Heart left ventricle (tissue), 16 donors: ENCODE measurements at regions of chr4 and their contacts with region 1.

Region 1: GRCh38 chr4:134499074-134499473 is 297.5 kb upstream of the PABPC4L start:
- DNase-seq: no peak
- ATAC-seq: no peak
- H3K4me3 ChIP-seq: no peak overlapping the region
- H3K27ac ChIP-seq: no peak overlapping the region
- H3K4me1 ChIP-seq: no peaks in the 10 kb centered on the region
- H3K27me3 ChIP-seq: no peaks in the 10 kb centered on the region
- CTCF ChIP-seq: no peak
- POLR2A ChIP-seq: no peak

Region 2: DNA sequence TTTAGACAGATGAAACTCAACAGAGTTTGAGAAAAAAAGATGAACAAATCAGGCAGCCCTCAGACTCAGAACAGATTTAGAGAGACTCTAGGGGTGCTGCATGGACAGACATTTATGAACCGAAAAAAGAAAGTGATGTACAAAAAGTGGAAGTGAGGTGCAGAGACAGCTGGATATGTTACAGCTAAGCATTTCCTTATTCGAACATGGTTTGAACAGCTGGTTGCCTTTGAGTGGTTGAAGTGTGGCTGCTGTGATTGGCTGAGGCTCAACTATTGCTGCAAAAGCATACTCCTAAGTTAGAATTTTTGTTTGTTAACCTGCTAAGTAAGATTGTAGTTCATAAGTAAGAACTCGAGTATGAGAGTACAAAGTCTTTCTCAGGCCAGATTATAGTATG is 34.0 kb after region 1 on chr4:
- intact Hi-C with region 1: loop called in 1 of 10 experiments (anchors 1 kb)
- DNase-seq: no peak
- ATAC-seq: no peak
- H3K4me3 ChIP-seq: no peak overlapping the region
- H3K27ac ChIP-seq: no peak overlapping the region
- H3K4me1 ChIP-seq: peaks cover 0 to 6% (median 0%) of the 10 kb centered on the region in 12 donors
- H3K27me3 ChIP-seq: no peaks in the 10 kb centered on the region
- CTCF ChIP-seq: no peak
- POLR2A ChIP-seq: no peak